ENCODE measurements at regions of chr3 and their contacts with region 1.

Region 1: GRCh38 chr3:78659386-78659987 is 1108.3 kb downstream of the ROBO1 start:
- DNase-seq: peak; percentile 42
- ATAC-seq: no peak
- H3K4me3 Mint-ChIP-seq: no peak overlapping the region
- H3K27ac Mint-ChIP-seq: no peak overlapping the region
- H3K4me1 Mint-ChIP-seq: no peaks in the 10 kb centered on the region
- H3K27me3 Mint-ChIP-seq: no peaks in the 10 kb centered on the region

Region 2: DNA sequence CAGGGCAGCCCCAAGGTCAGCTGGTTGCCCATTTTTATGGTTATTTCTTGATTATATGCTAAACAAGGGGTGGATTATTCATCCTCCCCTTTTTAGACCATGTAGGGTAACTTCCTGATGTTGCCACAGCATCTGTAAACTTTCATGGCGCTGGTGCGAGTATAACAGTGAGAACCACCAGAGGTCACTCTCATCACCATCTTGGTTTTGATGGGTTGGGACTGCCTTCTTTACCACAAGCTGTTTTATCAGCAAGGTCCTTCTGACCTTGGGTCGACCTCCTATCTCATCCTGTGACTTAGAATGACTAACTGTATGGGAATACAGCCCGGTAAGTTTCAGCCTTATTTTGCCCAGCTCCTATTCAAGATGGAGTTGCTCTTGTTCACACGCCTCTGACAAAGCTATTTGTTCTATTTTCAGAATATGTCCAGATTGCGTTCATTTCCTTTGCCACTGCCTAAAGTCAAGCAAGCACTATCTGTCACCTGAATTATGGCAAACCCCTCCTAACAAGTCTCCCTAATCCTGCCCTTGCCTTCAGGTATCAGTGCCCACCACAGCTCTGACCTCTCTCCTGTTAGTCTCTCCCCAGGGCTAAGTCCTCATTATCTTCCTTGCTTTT is 1311.1 kb before region 1 on chr3:
- CTCF ChIA-PET with region 1: no interaction called
- POLR2A ChIA-PET with region 1: no interaction called
- intact Hi-C with region 1: no loop called
- DNase-seq: no peak
- ATAC-seq: no peak
- H3K4me3 Mint-ChIP-seq: no peak overlapping the region
- H3K27ac Mint-ChIP-seq: no peak overlapping the region
- H3K4me1 Mint-ChIP-seq: no peaks in the 10 kb centered on the region
- H3K27me3 Mint-ChIP-seq: no peaks in the 10 kb centered on the region

Region 3: GRCh38 chr3:79032686-79033318 is 373.3 kb after region 1 on chr3:
- CTCF ChIA-PET with region 1: interaction called, 15 read pairs
- POLR2A ChIA-PET with region 1: no interaction called
- intact Hi-C with region 1: loop called (anchors 1 to 2 kb)
- DNase-seq: no peak
- ATAC-seq: no peak
- H3K4me3 Mint-ChIP-seq: no peak overlapping the region
- H3K27ac Mint-ChIP-seq: no peak overlapping the region
- H3K4me1 Mint-ChIP-seq: no peaks in the 10 kb centered on the region
- H3K27me3 Mint-ChIP-seq: no peaks in the 10 kb centered on the region

Region 4: DNA sequence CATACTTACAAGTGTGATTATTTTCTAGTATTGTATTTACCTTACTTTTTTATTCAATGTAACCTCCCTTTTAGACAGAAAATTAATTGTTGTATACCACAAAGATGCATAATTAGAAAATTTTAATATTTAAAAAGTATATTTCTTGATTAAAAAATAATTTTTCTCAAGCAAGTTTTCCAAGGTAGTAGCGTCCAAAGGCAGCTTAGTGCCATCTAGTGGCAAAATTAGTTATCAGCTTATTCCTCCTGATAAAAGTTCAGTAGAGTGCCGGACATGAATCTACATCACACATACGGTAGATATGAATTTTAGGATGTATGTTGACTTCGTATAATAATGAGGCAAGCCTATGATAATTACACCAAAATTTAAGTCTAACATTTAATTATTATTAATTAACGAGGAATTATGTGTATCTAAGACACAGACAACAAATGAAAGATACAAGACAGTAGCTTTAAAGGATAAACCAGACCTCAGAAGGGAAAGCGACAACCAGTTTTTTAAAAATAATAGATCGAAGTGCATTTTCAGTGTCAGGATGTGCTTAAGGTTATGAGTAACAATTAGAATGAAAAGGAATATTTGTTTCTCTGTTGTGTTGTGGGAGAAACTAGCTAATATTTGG is 702.4 kb after region 1 on chr3:
- CTCF ChIA-PET with region 1: interaction called, 3 read pairs
- POLR2A ChIA-PET with region 1: no interaction called
- intact Hi-C with region 1: loop called (anchors 2 to 5 kb)
- DNase-seq: no peak
- ATAC-seq: no peak
- H3K4me3 Mint-ChIP-seq: no peak overlapping the region
- H3K27ac Mint-ChIP-seq: no peak overlapping the region
- H3K4me1 Mint-ChIP-seq: no peaks in the 10 kb centered on the region
- H3K27me3 Mint-ChIP-seq: no peaks in the 10 kb centered on the region

Region 5: DNA sequence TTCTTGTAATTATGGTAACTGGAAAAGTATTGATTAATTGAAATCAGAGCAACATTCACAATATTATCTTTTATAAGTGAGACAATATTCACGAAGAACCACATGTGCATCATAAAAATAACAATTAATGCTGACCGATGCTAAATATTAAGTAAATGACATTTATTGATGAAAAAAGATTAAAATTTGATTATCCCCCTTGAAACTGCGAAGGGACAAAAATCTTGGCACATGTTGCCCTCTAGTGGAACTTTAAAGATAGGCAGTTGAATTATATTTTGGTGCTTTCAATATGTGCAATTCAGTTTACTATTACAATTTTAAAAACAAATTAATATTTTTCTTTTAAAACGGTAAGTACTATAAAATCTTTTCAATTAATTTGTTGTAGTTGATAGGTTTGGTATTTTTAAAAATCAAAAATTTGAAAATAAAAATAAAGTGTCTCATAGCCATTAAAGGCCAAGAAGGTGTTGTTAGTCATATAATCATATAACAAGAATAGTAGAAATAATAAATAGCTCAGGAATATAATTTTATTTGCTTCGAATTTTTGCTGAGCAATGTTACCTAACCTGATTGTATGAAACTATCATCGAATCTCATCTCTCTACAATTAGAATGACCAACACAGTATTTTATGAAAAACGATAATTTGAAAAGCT is 838.1 kb after region 1 on chr3:
- CTCF ChIA-PET with region 1: no interaction called
- POLR2A ChIA-PET with region 1: no interaction called
- intact Hi-C with region 1: loop called in 1 of 2 experiments (anchors 2 kb)
- DNase-seq: no peak
- ATAC-seq: no peak
- H3K4me3 Mint-ChIP-seq: no peak overlapping the region
- H3K27ac Mint-ChIP-seq: no peak overlapping the region
- H3K4me1 Mint-ChIP-seq: no peaks in the 10 kb centered on the region
- H3K27me3 Mint-ChIP-seq: no peaks in the 10 kb centered on the region

Measured in activated CD4-positive, alpha-beta T cell treated with anti-CD3 and anti-CD28 coated beads for 36 hours (primary cell).